Sigmoid colon (tissue), 7 donors: ENCODE measurements at regions of chr6 and their contacts with region 1.

Region 1: DNA sequence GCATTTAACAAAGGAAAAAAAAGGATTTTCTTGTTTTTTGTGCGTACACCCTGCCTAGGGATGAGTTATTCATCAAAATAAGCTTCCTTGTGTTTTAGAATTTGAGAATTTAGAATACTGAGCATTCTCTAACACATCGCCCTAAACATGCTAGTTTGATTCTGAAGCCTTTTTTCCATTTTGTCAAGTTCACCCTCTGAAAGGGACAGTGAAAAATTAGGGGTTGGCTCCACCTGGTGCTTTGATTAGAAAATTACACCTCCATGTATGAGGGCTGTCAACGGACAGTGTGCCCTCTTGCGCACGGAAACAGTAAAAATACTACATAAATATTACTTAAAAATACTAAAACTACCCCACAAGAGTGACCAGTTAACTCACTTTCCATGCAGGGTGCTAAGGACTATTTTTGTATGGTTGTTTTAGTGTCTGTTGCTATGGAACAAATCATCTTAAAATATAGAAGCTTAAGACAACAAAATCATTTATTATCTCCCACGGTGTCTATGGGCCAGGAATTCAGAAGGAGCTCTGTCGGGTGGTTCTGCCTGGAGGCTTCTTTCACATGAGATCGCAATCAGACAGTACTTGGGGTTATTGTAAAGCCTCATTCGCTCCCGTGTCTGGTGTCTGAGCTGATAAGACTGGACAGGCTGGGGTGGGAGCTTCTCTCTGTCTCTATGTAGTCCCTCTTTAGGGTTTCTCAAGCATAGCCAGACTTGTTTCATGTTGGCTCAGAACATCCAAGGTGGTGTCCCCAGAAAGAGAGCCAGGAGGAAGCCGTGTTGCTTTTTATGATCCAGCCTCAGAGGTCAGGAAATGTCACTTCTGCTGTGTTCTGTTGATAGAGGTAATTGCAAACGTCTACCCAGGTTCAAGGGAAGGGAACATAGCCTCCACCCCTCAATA is 41.1 kb upstream of the TMEM170B start:
- DNase-seq: peak; percentile 74
- H3K4me3 ChIP-seq: no peak overlapping the region
- H3K27ac ChIP-seq: peak overlapping the region in 1 of 4 donors; percentile 21
- H3K4me1 ChIP-seq: peaks cover 0 to 12% (median 5%) of the 10 kb centered on the region in 4 donors
- H3K27me3 ChIP-seq: no peaks in the 10 kb centered on the region
- CTCF ChIP-seq: peak; percentile 78 to 89 (median 84)
- EP300 ChIP-seq: no peak
- POLR2A ChIP-seq: no peak

Region 2: GRCh38 chr6:11033825-11034224 is 462.6 kb before region 1 on chr6:
- intact Hi-C with region 1: no loop called
- DNase-seq: no peak
- H3K4me3 ChIP-seq: no peak overlapping the region
- H3K27ac ChIP-seq: no peak overlapping the region
- H3K4me1 ChIP-seq: no peaks in the 10 kb centered on the region
- H3K27me3 ChIP-seq: peaks cover 0 to 8% (median 0%) of the 10 kb centered on the region in 3 donors
- CTCF ChIP-seq: no peak
- EP300 ChIP-seq: no peak
- POLR2A ChIP-seq: no peak

Region 3: GRCh38 chr6:11093589-11094410 is 402.6 kb before region 1 on chr6 and contains the start of gene SMIM13:
- intact Hi-C with region 1: loop called (anchors 5 kb)
- DNase-seq: peak; percentile 98
- H3K4me3 ChIP-seq: peak within 1 kb of the TSS; percentile 89 to 98 (median 92)
- H3K27ac ChIP-seq: peak within 1 kb of the TSS; percentile 97 to 98 (median 98)
- H3K4me1 ChIP-seq: peaks cover 0 to 24% (median 18%) of the 10 kb centered on the region in 4 donors
- H3K27me3 ChIP-seq: no peaks in the 10 kb centered on the region
- CTCF ChIP-seq: peak; percentile 33 to 52 (median 42)
- EP300 ChIP-seq: no peak
- POLR2A ChIP-seq: peak; percentile 54 to 57
- total RNA-seq, gene SMIM13: 8.7 to 12.1 (median 8.8) TPM

Region 4: DNA sequence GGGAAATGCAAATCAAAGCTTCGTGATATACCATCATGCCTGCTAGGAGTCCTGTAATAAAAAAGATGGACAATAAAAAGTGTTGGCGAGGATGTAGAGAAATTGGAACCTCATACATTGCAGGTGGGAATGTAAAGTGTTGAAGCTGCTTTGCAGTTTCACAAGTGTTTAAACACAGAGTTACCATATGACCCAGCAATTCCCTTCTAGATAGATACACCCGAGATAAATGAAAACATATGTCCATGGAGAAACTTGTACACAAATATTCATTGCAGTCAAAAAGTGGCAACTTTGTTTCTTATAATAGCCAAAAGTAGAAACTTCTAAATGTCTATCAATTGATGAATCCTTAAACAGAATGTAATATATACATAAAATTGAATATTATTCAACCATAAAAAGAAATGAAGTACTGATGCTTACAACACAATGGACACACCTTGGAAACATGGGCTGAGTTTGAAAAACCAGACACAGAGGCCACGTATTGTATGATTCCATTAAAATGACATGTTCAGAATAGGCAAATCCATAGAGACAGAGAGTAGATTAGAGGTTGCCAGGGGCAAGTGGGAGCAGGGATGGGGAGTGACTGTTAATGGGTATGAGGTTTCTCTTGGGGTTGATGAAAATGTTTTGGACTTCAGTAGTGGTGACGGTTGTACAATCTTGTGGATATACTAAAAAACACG is 364.1 kb before region 1 on chr6:
- intact Hi-C with region 1: no loop called
- DNase-seq: no peak
- H3K4me3 ChIP-seq: no peak overlapping the region
- H3K27ac ChIP-seq: no peak overlapping the region
- H3K4me1 ChIP-seq: peaks cover 0 to 10% (median 0%) of the 10 kb centered on the region in 4 donors
- H3K27me3 ChIP-seq: no peaks in the 10 kb centered on the region
- CTCF ChIP-seq: no peak
- EP300 ChIP-seq: no peak
- POLR2A ChIP-seq: no peak

Region 5: DNA sequence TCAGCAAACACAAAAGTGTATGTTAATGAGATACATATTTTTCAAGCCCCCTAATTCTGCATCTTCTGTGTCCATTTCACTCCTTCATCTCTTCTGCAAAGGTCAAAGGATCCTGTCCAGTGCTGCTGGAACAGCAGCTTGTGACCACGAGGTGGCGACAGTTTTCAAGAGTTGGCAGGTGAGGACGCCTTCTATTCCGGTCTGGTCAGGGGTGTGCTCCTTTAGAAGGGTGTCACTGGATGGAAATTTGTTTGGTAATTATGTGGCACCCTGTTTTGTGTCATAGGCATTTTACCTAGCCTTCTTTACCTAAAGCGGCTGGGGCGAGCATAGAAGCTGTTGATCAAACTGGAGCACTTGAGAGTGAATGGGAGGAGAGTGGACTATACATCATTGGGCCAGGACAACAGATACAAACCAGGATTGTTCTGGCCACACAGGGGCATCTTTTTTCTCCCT is 352.0 kb before region 1 on chr6:
- intact Hi-C with region 1: loop called (anchors 1 kb)
- DNase-seq: peak; percentile 85
- H3K4me3 ChIP-seq: no peak overlapping the region
- H3K27ac ChIP-seq: no peak overlapping the region
- H3K4me1 ChIP-seq: peaks cover 0 to 5% (median 0%) of the 10 kb centered on the region in 4 donors
- H3K27me3 ChIP-seq: no peaks in the 10 kb centered on the region
- CTCF ChIP-seq: peak; percentile 79 to 91 (median 84)
- EP300 ChIP-seq: no peak
- POLR2A ChIP-seq: no peak

Region 6: DNA sequence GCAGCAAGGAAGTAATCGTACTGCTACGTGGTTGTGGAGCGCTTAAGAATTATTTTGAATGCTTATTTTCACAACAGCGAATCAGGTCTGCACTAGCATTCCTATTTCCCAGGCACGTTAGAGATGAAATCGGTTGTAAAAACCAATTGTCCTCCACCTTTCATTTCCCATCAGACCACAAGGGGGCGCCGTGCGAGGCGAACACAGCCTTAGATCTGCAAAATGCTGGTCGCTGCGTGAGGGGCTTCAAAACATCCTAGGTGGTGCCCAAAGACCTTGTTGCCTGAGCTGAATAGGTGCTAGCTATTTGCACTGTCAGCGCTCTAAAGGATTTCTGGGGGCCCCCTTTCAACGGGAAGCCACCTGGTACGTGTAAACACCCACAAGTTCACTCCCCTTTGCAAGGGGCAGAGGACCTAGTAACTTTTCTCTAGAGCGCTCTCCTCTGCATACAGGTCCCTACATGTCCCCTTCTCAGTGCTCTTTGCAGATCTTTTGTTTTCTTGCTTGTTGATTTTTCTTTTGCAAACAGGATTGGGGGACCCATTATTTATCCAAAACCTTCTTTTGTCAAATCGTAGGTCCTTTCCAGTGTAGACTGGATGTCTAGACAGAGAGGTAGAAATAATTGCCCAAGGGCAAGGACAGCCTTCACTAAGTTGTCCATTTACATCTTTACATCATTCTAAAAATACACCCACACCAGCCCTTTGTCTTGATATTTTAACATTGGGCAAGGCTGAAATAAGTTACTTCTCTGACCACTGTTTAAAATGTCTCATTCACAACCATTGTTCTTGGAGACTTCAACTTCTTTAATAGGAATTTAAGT is 323.7 kb before region 1 on chr6:
- intact Hi-C with region 1: loop called (anchors 10 kb)
- DNase-seq: no peak
- H3K4me3 ChIP-seq: no peak overlapping the region
- H3K27ac ChIP-seq: no peak overlapping the region
- H3K4me1 ChIP-seq: peaks cover 0 to 7% (median 3%) of the 10 kb centered on the region in 4 donors
- H3K27me3 ChIP-seq: no peaks in the 10 kb centered on the region
- CTCF ChIP-seq: peak; percentile 46 to 78 (median 66)
- EP300 ChIP-seq: no peak
- POLR2A ChIP-seq: no peak

Region 7: GRCh38 chr6:11514672-11515071 is 18.3 kb after region 1 on chr6:
- intact Hi-C with region 1: no loop called
- DNase-seq: no peak
- H3K4me3 ChIP-seq: no peak overlapping the region
- H3K27ac ChIP-seq: no peak overlapping the region
- H3K4me1 ChIP-seq: no peaks in the 10 kb centered on the region
- H3K27me3 ChIP-seq: no peaks in the 10 kb centered on the region
- CTCF ChIP-seq: no peak
- EP300 ChIP-seq: no peak
- POLR2A ChIP-seq: no peak

Region 8: GRCh38 chr6:11575408-11576033 is 79.1 kb after region 1 on chr6:
- intact Hi-C with region 1: loop called (anchors 10 kb)
- DNase-seq: peak; percentile 77
- H3K4me3 ChIP-seq: no peak overlapping the region
- H3K27ac ChIP-seq: no peak overlapping the region
- H3K4me1 ChIP-seq: no peaks in the 10 kb centered on the region
- H3K27me3 ChIP-seq: no peaks in the 10 kb centered on the region
- CTCF ChIP-seq: peak; percentile 62 to 85 (median 76)
- EP300 ChIP-seq: no peak
- POLR2A ChIP-seq: no peak